Motor neuron (in vitro differentiated cells): ENCODE measurements at regions of chr21 and their contacts with region 1.

Region 1: DNA sequence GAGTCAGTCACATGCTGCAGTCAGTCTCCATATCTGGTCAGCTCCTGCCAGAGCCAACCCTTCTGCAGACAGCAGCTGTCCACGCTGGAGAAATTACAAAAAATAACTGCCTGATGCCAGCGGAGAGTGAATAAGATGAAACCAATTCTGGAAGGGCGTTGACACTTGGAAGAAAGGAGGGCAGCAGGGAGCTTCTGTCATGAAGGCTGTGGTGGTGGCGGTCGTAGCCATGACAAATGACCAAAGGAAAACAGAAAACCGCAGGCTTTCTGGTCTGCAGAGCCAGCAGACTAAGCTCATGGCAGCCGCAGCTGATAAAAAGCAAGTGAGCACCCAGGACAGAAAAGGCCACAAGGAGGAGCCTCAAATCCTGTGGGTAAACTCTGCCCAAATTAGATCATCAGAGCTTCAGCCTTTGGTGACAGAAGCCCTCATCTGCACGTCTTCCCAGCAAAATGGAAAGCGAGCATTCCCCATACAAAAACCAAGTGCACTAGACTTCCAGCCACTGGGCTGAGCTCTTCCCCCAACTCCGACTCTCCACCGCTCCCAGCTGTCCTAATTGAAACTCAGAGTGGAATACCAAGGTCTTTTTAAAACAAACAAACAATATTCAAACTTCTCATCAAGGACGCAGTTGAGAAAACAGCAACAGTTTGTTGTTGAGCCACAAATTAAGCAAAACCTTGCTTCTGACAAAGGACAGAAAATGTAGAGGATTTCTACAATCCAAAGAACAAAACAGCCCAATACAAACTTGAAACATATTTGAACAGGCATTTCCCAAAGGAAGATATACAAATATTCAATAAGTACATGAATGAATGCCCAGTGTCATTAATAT is 28.7 kb downstream of the RSPH1 start:
- ATAC-seq: peak in 7 of 8 experiments; percentile 25 to 91 (median 84)
- H3K4me3 ChIP-seq: no peak overlapping the region
- H3K27ac ChIP-seq: peak overlapping the region; percentile 30 to 39
- H3K4me1 ChIP-seq: peaks cover 17 to 21% of the 10 kb centered on the region in 2 donors

Region 2: DNA sequence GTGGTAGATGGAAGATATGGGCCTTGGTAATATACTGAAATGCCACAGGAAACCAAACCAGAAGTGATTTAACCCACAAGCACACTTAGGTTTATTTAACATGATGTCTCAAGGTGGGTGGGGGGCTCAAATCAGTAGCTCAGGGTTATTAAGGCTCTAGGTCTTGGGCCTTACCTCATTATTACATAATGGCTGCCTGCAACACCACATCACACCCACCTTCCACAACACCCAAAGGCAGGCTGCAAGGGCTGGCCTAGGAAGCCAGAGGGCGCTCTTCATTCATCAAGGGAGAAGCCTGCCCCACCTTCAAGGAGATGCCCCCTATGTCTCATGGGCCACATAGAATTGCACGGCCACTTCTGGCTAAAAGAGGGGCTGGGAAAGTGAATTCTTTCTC is 107.0 kb before region 1 on chr21:
- in situ Hi-C with region 1: loop called in 1 of 9 experiments (anchors 25 kb)
- ATAC-seq: no peak
- H3K4me3 ChIP-seq: no peak overlapping the region
- H3K27ac ChIP-seq: no peak overlapping the region
- H3K4me1 ChIP-seq: no peaks in the 10 kb centered on the region

Region 3: DNA sequence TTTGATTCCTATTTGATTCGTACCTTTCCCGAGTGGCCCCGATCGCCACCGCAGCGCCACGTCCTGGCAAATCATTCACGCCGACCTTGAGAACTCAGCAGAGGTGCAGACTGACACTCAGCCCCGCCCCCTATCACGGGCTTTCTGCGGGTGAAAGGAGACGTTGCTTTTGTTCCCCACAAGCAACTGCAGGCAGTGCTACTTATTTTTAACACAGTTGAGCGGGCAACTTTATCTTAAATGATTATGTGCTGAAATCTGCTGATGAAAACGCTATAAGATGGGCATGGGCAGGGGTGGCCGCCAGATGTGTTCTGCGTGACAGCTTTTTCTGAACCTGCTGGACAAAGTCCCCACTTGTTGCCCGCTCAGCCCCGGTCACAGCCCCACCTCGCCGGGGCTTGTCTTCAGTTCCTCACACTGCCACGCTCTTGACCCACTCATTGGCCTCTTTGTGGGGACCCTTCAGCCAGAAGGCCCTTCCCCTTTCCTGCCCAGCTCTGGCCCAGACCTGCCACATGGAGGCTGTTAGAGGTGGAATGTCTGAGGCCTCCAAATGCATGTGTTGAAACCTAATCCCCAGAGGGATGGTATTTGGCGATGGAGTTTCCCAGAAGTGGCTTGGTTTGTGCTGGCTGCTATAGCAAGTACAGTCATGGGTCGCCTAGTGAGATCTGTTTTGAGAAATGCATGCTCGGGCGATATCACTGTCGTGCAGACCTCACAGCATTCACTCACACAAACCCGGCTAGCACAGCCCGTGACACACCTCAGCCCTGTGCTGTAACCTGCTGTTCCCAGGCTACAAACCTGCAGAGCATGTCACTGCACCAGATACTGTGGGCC is 1235.9 kb after region 1 on chr21:
- in situ Hi-C with region 1: no loop called
- ATAC-seq: peak; percentile 64 to 93 (median 72)
- H3K4me3 ChIP-seq: no peak overlapping the region
- H3K27ac ChIP-seq: peak overlapping the region in 1 of 2 donors; percentile 31
- H3K4me1 ChIP-seq: peaks cover 16 to 20% of the 10 kb centered on the region in 2 donors